ENCODE measurements at regions of chr3 and their contacts with region 1.

Region 1: GRCh38 chr3:172061724-172062184 is 22.4 kb downstream of the FNDC3B start:
- H3K4me3 Mint-ChIP-seq: peak overlapping the region; percentile 65
- H3K27ac Mint-ChIP-seq: peak overlapping the region; percentile 85
- H3K4me1 Mint-ChIP-seq: peaks cover 71% of the 10 kb centered on the region
- H3K27me3 Mint-ChIP-seq: no peaks in the 10 kb centered on the region

Region 2: GRCh38 chr3:172044833-172045585 is 16.7 kb before region 1 on chr3:
- intact Hi-C with region 1: loop called (anchors 2 kb)
- H3K4me3 Mint-ChIP-seq: no peak overlapping the region
- H3K27ac Mint-ChIP-seq: no peak overlapping the region
- H3K4me1 Mint-ChIP-seq: peaks cover 52% of the 10 kb centered on the region
- H3K27me3 Mint-ChIP-seq: no peaks in the 10 kb centered on the region

Region 3: GRCh38 chr3:172092658-172093057 is 30.9 kb after region 1 on chr3:
- intact Hi-C with region 1: no loop called
- H3K4me3 Mint-ChIP-seq: no peak overlapping the region
- H3K27ac Mint-ChIP-seq: no peak overlapping the region
- H3K4me1 Mint-ChIP-seq: peaks cover 43% of the 10 kb centered on the region
- H3K27me3 Mint-ChIP-seq: no peaks in the 10 kb centered on the region

Region 4: DNA sequence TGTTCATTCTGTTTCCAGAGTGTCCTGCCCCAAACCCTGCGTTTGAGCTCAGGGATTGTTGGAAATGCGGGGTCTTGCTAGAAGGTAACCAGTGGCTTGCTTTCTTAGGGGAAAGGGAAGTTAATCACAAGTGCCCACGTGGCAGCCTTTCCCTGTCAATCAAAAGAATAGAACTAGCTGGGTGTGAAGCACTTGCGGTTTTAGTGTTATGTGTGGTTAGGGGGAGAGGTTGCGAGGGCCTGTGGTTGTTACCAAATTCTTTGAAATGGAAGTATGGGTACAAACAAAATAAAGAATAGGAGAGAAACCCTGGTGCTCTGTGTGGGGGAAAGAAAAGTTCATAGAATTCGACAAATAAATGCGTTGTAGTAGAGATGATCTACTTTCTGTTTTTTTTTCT is 45.2 kb after region 1 on chr3:
- intact Hi-C with region 1: loop called (anchors 5 kb)
- H3K4me3 Mint-ChIP-seq: peak overlapping the region; percentile 68
- H3K27ac Mint-ChIP-seq: peak overlapping the region; percentile 90
- H3K4me1 Mint-ChIP-seq: peaks cover 64% of the 10 kb centered on the region
- H3K27me3 Mint-ChIP-seq: no peaks in the 10 kb centered on the region